Activated naive CD8-positive, alpha-beta T cell treated with anti-CD3 and anti-CD28 coated beads, Interleukin-2, amount 10 ng/mL, durations not matched to agents 7 days and 5 days (primary cell): ENCODE measurements at regions of chr4 and their contacts with region 1.

Region 1: GRCh38 chr4:6640292-6641163 is at the start of gene MRFAP1:
- DNase-seq: peak; percentile 95
- ATAC-seq: peak; percentile 82
- H3K4me3 Mint-ChIP-seq: peak within 1 kb of the TSS; percentile 89
- H3K27ac Mint-ChIP-seq: peak within 1 kb of the TSS; percentile 94
- H3K4me1 Mint-ChIP-seq: peaks cover 18% of the 10 kb centered on the region
- H3K27me3 Mint-ChIP-seq: no peaks in the 10 kb centered on the region
- total RNA-seq, gene MRFAP1: 123 to 128 TPM

Region 2: DNA sequence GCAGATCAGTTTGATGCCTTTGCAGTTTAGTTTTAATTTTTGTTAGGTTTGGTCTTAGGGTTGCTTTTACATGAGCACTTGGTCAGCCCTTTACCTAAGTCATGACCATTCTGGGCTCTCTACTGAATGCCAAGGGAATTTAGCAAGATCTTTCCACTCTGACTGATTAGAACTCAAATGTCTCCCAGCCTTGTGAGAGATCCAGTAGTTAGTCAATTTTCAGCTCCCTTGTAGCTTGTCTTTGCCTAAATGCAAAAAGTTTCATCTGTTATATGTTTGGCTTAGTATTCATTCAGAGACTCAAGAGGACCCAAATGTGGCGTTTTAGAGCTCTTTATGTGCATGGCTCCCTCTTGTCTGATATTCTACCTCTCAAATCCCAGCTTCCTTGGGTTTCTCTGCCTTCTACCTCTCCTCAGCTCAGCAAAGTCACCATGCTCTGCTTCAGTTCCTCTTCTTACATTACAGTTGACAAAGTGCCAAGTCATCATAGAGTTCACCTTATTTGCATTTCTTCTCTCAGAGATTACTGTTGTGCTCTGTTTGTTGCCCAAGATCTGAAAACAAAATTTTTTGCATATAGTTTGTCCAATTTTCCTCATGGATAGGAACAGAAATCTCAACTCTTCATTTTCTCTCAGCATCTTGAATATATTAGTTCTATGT is 422.7 kb before region 1 on chr4:
- POLR2A ChIA-PET with region 1: no interaction called
- DNase-seq: no peak
- ATAC-seq: no peak
- H3K4me3 Mint-ChIP-seq: no peak overlapping the region
- H3K27ac Mint-ChIP-seq: no peak overlapping the region
- H3K4me1 Mint-ChIP-seq: no peaks in the 10 kb centered on the region
- H3K27me3 Mint-ChIP-seq: peaks cover 53% of the 10 kb centered on the region

Region 3: DNA sequence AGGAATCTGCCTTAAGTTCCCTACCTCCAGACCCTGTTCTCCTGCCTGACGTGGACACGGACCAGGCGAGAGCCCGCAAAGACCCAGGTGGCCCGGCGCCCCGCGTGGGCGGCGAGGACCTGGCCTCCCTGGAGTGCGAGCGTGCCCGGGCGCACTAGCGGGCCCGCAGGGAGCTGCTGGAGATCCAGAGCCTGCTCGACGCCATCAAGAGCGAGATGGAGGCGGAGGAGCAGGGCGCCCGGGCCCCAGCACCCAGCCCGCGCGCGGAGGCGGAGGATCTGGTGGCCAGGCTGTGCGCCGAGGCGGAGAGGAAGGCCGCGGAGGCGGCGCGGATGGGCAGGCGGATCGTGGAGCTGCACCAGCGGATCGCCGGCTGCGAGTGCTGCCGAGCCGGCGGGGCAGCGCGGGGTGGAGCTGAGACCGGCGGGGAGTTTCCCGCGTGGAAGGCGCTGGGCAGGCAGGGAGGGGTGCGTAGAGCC is 18.1 kb after region 1 on chr4:
- POLR2A ChIA-PET with region 1: interaction called, 19 read pairs
- DNase-seq: peak; percentile 68
- ATAC-seq: peak; percentile 82
- H3K4me3 Mint-ChIP-seq: peak overlapping the region; percentile 68
- H3K27ac Mint-ChIP-seq: no peak overlapping the region
- H3K4me1 Mint-ChIP-seq: peaks cover 6% of the 10 kb centered on the region
- H3K27me3 Mint-ChIP-seq: peaks cover 43% of the 10 kb centered on the region

Region 4: GRCh38 chr4:6673660-6674499 is 33.4 kb after region 1 on chr4:
- POLR2A ChIA-PET with region 1: interaction called, 68 read pairs
- DNase-seq: peak; percentile 95
- ATAC-seq: peak; percentile 78
- H3K4me3 Mint-ChIP-seq: peak overlapping the region; percentile 94
- H3K27ac Mint-ChIP-seq: peak overlapping the region; percentile 99
- H3K4me1 Mint-ChIP-seq: peaks cover 40% of the 10 kb centered on the region
- H3K27me3 Mint-ChIP-seq: peaks cover 1% of the 10 kb centered on the region

Region 5: DNA sequence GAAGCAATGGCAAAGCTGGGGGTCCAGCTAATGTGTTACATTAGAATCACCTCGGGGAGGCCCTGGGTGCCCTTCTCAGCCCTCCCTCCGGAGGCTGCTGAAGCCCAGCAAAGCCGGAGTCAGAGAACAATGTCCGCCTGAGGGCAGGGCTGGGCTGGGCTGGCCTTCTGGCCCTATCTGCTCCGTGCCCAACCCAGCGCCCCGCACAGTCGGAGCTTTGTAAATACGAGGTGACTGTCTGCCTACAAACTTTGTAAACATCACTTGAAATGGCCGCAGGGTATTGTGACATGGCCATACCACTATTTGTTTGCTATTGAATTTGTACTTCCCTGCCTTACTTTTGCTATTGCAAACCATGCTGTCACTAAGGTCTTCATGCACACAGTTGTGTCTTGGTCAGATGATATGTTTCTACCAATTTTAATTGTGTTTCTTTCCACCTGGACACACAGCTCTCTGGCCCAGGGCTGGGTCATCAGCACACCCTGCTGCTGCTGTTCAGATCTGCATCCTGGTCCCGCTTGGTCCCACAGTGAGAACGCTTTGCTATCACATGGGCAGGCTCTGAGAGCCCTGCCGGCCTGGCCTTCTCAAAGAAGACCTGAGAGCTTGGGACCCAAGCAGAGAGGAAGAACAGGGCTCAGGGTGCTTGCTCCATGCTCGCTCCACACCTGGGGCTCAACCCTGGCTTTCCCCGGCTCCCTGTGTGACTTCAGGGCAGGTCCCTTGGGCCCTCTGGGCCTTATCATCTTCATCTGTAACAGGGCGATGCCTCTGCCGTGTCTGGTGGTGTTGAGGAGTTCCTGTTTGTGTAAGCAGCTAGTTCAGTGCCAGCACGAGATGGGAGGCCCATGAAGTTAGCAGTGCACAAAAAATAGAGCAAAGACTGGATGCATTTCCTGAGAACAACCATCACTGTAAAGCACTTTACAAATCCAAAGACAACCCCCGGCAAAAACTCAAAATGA is 55.4 kb after region 1 on chr4:
- POLR2A ChIA-PET with region 1: interaction called, 28 read pairs
- DNase-seq: peak; percentile 60
- ATAC-seq: peak; percentile 83
- H3K4me3 Mint-ChIP-seq: peak overlapping the region; percentile 68
- H3K27ac Mint-ChIP-seq: peak overlapping the region; percentile 97
- H3K4me1 Mint-ChIP-seq: peaks cover 56% of the 10 kb centered on the region
- H3K27me3 Mint-ChIP-seq: no peaks in the 10 kb centered on the region

Region 6: DNA sequence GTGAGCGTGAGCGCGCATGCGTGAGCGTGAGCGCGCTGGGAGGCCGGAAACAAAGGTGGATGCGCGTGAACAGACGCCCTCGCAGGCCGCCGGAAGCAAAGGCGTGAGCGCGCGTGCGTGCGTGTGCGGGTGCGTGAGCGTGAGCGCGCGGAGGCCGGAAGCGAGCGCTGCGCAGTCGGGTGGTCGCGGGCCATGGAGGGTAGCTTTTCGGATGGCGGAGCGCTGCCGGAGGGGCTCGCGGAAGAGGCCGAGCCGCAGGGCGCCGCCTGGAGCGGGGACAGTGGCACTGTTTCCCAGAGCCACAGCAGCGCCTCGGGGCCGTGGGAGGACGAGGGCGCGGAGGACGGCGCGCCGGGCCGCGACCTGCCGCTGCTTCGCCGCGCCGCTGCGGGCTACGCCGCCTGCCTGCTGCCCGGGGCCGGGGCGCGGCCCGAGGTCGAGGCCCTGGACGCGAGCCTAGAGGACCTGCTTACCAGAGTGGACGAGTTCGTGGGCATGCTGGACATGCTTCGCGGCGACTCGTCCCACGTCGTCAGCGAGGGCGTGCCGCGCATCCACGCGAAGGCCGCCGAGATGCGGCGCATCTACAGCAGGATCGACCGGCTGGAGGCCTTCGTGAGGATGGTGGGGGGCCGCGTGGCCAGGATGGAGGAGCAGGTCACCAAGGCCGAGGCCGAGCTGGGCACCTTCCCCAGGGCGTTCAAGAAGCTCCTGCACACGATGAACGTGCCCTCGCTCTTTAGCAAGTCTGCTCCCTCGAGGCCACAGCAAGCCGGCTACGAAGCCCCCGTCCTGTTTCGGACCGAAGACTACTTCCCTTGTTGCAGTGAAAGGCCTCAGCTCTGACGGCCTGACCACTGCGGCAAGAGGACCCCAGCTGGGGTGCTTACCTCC is 75.7 kb after region 1 on chr4 and contains the start of gene BLOC1S4:
- POLR2A ChIA-PET with region 1: interaction called, 16 read pairs
- DNase-seq: peak; percentile 95
- ATAC-seq: peak; percentile 80
- H3K4me3 Mint-ChIP-seq: peak within 1 kb of the TSS; percentile 90
- H3K27ac Mint-ChIP-seq: peak within 1 kb of the TSS; percentile 95
- H3K4me1 Mint-ChIP-seq: peaks cover 25% of the 10 kb centered on the region
- H3K27me3 Mint-ChIP-seq: peaks cover 2% of the 10 kb centered on the region
- total RNA-seq, gene BLOC1S4: 23.9 to 24.3 TPM